Lower leg skin (tissue), 4 donors: ENCODE measurements at regions of chr4 and their contacts with region 1.

Region 1: DNA sequence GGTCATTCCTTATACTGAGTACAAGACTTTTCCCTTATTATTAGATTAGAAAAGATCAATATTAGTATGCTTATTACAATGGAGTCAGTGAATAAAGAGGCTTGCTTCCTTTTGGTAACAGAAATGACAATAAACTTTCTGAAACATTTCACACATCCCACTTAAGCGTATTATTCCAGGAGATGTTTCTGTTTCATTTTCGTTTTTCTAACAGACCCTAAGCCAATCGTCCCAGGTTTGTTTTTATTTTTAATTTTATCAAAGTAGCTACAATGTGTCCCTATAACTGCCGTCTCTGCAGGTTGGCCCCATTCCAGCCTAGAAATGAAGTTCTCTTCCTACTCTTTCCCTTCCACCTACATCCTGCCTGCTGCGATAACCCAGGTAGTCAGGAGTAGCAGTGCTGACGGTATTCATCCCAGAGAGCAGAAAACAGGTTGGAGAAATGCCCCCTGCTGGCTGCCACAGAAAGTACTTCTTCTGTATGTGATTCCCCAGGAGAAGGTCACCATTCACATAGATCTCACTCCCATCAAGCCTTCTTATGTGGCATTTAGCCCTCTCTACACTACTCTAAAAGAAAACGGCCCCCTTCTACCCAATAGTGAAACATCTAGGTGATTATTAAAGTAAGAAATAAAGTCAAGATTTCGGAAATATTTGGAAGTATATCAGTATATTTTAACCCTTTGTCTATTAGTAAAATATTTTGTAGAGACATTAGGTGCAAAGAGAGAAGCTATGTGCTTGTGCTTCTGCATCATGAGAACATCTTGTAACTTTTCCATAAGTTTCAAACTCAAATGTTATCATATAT is 40.4 kb downstream of the ENPEP start:
- DNase-seq: peak; percentile 61 to 89
- H3K4me3 ChIP-seq: no peak overlapping the region
- CTCF ChIP-seq: peak in 1 of 3 donors; percentile 53
- POLR2A ChIP-seq: no peak

Region 2: GRCh38 chr4:110005461-110006056 is 510.8 kb before region 1 on chr4:
- intact Hi-C with region 1: loop called (anchors 5 kb)
- DNase-seq: no peak
- H3K4me3 ChIP-seq: no peak overlapping the region
- CTCF ChIP-seq: no peak
- POLR2A ChIP-seq: no peak

Region 3: GRCh38 chr4:110216129-110216528 is 300.2 kb before region 1 on chr4:
- intact Hi-C with region 1: no loop called
- DNase-seq: no peak
- H3K4me3 ChIP-seq: no peak overlapping the region
- CTCF ChIP-seq: no peak
- POLR2A ChIP-seq: no peak